Activated B cell treated with CpG ODN at 0.5 μM for 24 hours (primary cell): ENCODE measurements at regions of chr11 and their contacts with region 1.

Region 1: DNA sequence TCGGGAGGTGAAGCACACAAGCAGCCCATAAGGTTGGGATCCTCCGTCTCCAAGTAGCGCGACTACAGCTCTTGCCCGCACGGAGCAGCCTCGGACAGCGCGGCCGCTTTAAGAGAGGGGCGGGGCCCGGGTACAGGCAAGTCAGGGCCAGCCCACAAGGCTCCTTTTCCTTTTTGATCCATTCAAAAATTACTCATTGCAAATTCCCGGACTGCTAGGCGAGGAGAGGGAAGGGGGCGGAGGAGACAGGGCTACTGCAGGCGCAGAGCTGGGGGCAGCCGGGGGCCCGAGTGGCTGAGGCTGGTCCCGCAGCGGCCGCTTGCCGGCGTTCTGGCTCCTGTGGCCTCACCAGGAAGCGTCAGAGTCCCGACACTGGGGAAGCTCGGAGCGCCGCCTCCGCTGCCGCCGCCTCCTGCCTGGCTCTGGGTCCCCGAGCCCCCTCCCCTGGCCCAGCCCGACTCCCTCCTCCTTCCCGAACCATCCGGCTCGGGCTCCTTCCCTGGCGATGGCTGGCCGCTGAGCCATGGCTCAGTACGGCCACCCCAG is at the start of gene UBASH3B:
- DNase-seq: peak; percentile 62
- ATAC-seq: peak; percentile 78
- H3K4me3 Mint-ChIP-seq: peak within 1 kb of the TSS; percentile 96
- H3K27ac Mint-ChIP-seq: peak within 1 kb of the TSS; percentile 79
- H3K4me1 Mint-ChIP-seq: peaks cover 21% of the 10 kb centered on the region
- H3K27me3 Mint-ChIP-seq: peaks cover 22% of the 10 kb centered on the region
- CTCF ChIP-seq: no peak
- total RNA-seq, gene UBASH3B: 2.9 and 4.3 TPM in 2 replicates

Region 2: GRCh38 chr11:122697636-122698167 is 42.1 kb after region 1 on chr11:
- CTCF ChIA-PET with region 1: interaction called, 4 read pairs
- POLR2A ChIA-PET with region 1: interaction called, 8 read pairs
- intact Hi-C with region 1: loop called (anchors 1 kb)
- DNase-seq: no peak
- ATAC-seq: peak; percentile 91
- H3K4me3 Mint-ChIP-seq: peak overlapping the region; percentile 56
- H3K27ac Mint-ChIP-seq: peak overlapping the region; percentile 65
- H3K4me1 Mint-ChIP-seq: peaks cover 74% of the 10 kb centered on the region
- H3K27me3 Mint-ChIP-seq: no peaks in the 10 kb centered on the region
- CTCF ChIP-seq: no peak

Region 3: GRCh38 chr11:122743949-122744348 is 88.3 kb after region 1 on chr11:
- CTCF ChIA-PET with region 1: interaction called, 7 read pairs
- POLR2A ChIA-PET with region 1: interaction called, 11 read pairs
- intact Hi-C with region 1: loop called (anchors 1 kb)
- DNase-seq: peak; percentile 51
- ATAC-seq: peak; percentile 51
- H3K4me3 Mint-ChIP-seq: no peak overlapping the region
- H3K27ac Mint-ChIP-seq: no peak overlapping the region
- H3K4me1 Mint-ChIP-seq: peaks cover 12% of the 10 kb centered on the region
- H3K27me3 Mint-ChIP-seq: no peaks in the 10 kb centered on the region
- CTCF ChIP-seq: no peak

Region 4: DNA sequence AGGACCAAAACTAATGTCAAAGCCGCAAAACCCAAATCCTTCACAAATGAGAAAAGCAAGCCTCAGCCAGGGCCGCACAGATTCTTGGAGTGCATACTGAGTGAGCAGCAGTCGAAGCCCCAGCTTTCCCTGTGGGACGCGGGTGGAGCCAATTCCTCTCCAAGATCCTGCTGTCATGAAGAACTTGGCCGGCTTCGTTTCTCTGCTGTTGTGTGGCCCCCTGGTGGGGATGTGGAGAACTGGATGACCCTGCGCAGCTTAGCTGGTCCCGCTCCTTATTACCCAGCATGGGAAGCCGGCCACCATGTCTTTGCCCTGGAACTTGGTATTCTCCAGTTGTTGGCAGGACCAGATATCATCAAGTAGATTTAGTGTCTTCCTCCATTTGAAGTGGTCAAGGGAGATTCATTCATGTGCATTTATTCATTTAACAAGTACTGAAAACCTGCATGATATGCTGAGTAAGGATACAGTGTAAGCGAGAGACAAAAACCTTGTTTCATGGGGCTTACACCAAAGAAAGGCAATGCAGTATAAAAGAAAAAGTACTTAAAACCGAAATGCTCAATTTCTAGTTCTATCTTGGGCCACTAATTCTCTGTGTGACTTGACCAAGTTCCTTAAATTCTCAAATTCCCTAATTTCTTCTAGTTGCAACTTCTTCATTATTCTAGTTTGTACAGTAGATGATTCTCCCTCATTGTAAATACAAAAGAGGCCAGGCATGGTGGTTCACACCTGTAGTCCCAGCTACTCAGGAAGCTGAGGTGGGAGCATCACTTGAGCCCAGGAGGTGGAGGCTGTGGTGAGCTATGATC is 126.0 kb after region 1 on chr11:
- CTCF ChIA-PET with region 1: interaction called, 6 read pairs
- POLR2A ChIA-PET with region 1: no interaction called
- intact Hi-C with region 1: loop called (anchors 1 kb)
- DNase-seq: peak; percentile 64
- ATAC-seq: peak; percentile 95
- H3K4me3 Mint-ChIP-seq: no peak overlapping the region
- H3K27ac Mint-ChIP-seq: no peak overlapping the region
- H3K4me1 Mint-ChIP-seq: no peaks in the 10 kb centered on the region
- H3K27me3 Mint-ChIP-seq: no peaks in the 10 kb centered on the region
- CTCF ChIP-seq: peak; percentile 85

Region 5: GRCh38 chr11:123062158-123062891 is 406.7 kb after region 1 on chr11:
- CTCF ChIA-PET with region 1: no interaction called
- POLR2A ChIA-PET with region 1: interaction called, 3 read pairs
- intact Hi-C with region 1: loop called (anchors 5 kb)
- DNase-seq: peak; percentile 98
- ATAC-seq: peak; percentile 82
- H3K4me3 Mint-ChIP-seq: peak overlapping the region; percentile 97
- H3K27ac Mint-ChIP-seq: peak overlapping the region; percentile 100
- H3K4me1 Mint-ChIP-seq: peaks cover 69% of the 10 kb centered on the region
- H3K27me3 Mint-ChIP-seq: no peaks in the 10 kb centered on the region
- CTCF ChIP-seq: no peak